Activated CD4-positive, alpha-beta memory T cell treated with anti-CD3 and anti-CD28 coated beads for 36 hours (primary cell): ENCODE measurements at regions of chr15 and their contacts with region 1.

Region 1: DNA sequence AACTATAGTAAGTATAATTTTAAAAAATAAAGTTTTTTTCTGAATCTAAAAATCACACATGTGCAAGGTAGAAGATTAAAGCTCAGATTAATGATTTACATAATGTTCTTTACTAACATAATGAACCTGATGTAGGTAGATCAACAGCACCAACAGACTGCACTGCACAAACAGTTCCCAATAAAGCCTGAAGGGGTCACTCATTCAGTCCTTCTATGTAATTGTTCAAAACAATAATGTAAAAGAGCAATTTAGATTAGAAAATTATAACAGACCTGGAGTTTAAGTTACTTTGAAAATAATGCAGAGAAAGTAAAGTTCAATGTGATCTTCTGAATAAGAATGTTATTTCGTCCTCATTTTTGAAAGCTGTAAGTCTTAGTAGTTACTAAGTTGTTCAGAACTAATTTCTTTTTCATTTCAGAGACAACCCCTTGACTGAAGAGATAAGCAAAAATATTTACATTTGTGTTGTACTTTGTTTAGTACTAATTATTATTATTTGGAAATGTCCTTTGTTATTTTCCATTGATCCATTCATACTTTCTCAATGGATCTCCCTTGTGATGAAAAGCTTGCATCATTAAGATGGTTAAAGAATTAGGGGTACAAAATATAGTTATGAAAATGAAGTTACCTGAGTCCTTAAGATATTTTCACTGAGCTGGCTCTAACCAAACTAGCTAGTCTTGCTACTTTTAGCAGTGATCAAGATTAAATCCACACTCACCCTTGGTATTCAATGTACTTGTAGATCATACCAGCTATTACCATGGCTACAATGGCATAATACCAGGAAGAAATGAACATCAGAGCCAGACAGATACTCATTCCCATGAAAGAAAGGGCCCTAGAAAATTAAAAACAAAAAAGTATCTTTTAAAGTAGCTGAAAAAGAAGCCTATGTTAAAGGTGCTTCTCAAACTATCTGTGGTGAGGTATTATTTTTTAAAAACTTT is 16.8 kb downstream of the EMC4 start:
- DNase-seq: peak; percentile 31
- H3K4me3 Mint-ChIP-seq: no peak overlapping the region
- H3K27ac Mint-ChIP-seq: peak overlapping the region; percentile 64
- H3K4me1 Mint-ChIP-seq: peaks cover 38% of the 10 kb centered on the region
- H3K27me3 Mint-ChIP-seq: no peaks in the 10 kb centered on the region

Region 2: GRCh38 chr15:33941279-33942063 is 300.2 kb before region 1 on chr15:
- CTCF ChIA-PET with region 1: no interaction called
- POLR2A ChIA-PET with region 1: no interaction called
- intact Hi-C with region 1: no loop called
- DNase-seq: no peak
- H3K4me3 Mint-ChIP-seq: no peak overlapping the region
- H3K27ac Mint-ChIP-seq: no peak overlapping the region
- H3K4me1 Mint-ChIP-seq: no peaks in the 10 kb centered on the region
- H3K27me3 Mint-ChIP-seq: no peaks in the 10 kb centered on the region

Region 3: DNA sequence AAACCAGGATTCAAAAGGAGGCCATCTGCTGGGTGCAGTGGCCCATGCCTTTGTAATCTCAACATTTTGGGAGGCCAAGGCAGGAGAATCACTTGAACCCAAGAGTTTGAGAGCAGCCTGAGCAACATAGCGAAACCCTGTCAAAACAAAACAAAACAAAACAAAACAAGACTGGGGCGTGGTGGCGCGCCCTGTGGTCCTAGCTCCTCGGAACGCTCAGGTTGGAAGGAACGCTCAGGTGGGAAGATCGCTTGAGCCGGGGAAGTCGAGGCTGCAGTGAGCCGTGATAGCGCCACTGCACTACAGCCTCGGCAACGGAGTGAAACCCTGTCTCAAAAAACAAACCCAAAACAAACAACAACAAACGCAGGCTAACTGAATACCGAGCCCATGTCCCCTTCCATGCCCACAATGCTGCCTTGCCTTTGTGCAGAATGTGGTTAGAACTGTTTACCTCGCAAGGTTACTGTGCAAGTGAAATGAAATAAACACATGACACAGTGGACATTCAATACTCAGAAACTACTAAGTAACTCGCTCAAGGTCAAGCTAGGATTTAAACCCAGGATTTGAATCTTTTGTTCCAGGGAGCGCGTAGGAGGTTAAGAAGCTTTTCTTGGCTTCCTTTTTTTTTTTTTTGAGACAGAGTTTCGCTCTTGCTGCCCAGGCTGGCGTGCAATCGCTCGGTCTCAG is 17.6 kb before region 1 on chr15:
- CTCF ChIA-PET with region 1: interaction called, 3 read pairs
- POLR2A ChIA-PET with region 1: no interaction called
- intact Hi-C with region 1: loop called (anchors 1 kb)
- DNase-seq: no peak
- H3K4me3 Mint-ChIP-seq: peak overlapping the region; percentile 98
- H3K27ac Mint-ChIP-seq: peak overlapping the region; percentile 98
- H3K4me1 Mint-ChIP-seq: peaks cover 27% of the 10 kb centered on the region
- H3K27me3 Mint-ChIP-seq: peaks cover 2% of the 10 kb centered on the region

Region 4: GRCh38 chr15:34318277-34319079 is 76.8 kb after region 1 on chr15:
- CTCF ChIA-PET with region 1: interaction called, 6 read pairs
- POLR2A ChIA-PET with region 1: no interaction called
- intact Hi-C with region 1: loop called (anchors 1 kb)
- DNase-seq: peak; percentile 38
- H3K4me3 Mint-ChIP-seq: peak overlapping the region; percentile 96
- H3K27ac Mint-ChIP-seq: peak overlapping the region; percentile 88
- H3K4me1 Mint-ChIP-seq: peaks cover 36% of the 10 kb centered on the region
- H3K27me3 Mint-ChIP-seq: no peaks in the 10 kb centered on the region

Region 5: DNA sequence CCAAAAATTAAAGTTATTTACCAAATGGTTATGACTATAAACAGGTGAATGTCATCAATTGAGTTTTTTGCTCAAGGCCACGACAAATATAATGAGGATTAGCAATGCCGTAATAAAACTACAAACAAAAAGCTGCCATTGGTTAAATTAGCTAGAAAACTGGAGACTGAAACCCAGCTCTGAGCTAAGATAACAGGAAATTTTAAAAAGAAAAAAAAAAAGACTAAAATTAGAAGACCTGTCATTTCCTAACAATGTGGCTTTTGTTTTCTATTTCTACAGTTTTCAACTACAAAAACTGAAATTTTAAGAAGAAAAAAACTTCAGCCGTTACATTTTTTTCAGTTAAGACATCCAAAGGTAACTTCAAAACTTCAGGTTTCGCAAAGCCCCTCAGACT is 86.3 kb after region 1 on chr15:
- CTCF ChIA-PET with region 1: interaction called, 10 read pairs
- POLR2A ChIA-PET with region 1: no interaction called
- intact Hi-C with region 1: no loop called
- DNase-seq: no peak
- H3K4me3 Mint-ChIP-seq: peak overlapping the region; percentile 46
- H3K27ac Mint-ChIP-seq: peak overlapping the region; percentile 30
- H3K4me1 Mint-ChIP-seq: peaks cover 62% of the 10 kb centered on the region
- H3K27me3 Mint-ChIP-seq: no peaks in the 10 kb centered on the region

Region 6: GRCh38 chr15:34437687-34438086 is 196.0 kb after region 1 on chr15 and contains the start of gene GOLGA8A:
- CTCF ChIA-PET with region 1: no interaction called
- POLR2A ChIA-PET with region 1: no interaction called
- intact Hi-C with region 1: loop called (anchors 10 kb)
- DNase-seq: peak; percentile 74
- H3K4me3 Mint-ChIP-seq: peak within 1 kb of the TSS; percentile 81
- H3K27ac Mint-ChIP-seq: peak within 1 kb of the TSS; percentile 69
- H3K4me1 Mint-ChIP-seq: peaks cover 4% of the 10 kb centered on the region
- H3K27me3 Mint-ChIP-seq: no peaks in the 10 kb centered on the region
- total RNA-seq, gene GOLGA8A: 65.3 to 72.9 TPM